HEK293 (cell line): ENCODE measurements at regions of chr12 and their contacts with region 1.

Region 1: DNA sequence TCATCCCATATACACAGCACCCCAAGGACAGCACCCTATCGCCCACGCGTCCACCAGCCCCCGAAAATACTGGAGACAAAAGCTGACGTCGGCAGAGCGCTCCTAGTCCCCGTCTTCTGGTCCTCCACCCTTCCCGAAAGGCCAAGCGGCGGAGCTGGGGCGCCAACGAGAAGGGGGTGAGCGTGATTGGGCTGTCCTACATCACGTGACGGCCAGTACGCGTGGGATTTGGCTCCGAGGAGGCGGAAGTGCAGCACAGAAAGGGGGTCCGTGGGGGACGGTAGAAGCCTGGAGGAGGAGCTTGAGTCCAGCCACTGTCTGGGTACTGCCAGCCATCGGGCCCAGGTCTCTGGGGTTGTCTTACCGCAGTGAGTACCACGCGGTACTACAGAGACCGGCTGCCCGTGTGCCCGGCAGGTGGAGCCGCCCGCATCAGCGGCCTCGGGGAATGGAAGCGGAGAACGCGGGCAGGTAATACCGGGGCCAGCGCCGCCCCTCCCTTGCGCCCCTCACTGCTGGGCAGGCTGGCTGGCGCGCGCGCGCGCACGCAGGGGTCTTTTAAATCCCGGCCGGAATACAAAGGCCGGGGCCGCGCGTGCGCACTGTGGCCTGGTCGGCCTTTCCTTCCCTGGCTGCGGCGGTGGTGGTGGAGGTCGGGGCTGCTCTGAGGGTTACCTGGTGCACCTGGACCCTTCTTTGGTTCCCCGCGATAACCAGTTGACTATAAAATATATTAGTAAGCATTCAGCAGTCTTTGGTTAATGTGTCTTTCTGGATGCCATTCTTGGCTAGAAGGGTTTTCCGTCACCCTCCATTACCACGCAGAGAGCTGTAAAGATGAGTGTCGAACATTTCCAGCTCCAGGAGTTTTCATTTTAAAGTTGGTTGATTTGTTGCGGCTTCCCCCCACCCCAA is at the start of gene TDG:
- H3K4me3 ChIP-seq: peak within 1 kb of the TSS; percentile 83
- H3K27ac ChIP-seq: peak within 1 kb of the TSS; percentile 68
- H3K4me1 ChIP-seq: peaks cover 7% of the 10 kb centered on the region
- CTCF ChIP-seq: peak; percentile 95

Region 2: DNA sequence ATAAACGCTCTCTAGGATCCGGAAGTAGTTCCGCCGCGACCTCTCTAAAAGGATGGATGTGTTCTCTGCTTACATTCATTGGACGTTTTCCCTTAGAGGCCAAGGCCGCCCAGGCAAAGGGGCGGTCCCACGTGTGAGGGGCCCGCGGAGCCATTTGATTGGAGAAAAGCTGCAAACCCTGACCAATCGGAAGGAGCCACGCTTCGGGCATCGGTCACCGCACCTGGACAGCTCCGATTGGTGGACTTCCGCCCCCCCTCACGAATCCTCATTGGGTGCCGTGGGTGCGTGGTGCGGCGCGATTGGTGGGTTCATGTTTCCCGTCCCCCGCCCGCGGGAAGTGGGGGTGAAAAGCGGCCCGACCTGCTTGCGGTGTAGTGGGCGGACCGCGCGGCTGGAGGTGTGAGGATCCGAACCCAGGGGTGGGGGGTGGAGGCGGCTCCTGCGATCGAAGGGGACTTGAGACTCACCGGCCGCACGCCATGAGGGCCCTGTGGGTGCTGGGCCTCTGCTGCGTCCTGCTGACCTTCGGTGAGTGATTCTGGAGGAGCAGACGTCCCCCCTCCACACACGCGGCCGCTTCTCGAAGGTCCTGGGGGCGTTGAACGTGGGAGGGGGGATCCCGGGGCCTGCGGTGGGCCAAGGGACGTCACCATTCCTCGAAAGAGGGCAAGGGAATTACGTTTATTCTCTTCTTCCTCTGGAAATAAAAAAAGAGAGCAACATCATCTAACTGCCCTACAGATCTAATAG is 35.6 kb before region 1 on chr12 and contains the start of gene HSP90B1:
- CTCF ChIA-PET with region 1: no interaction called
- POLR2A ChIA-PET with region 1: interaction called, 49 read pairs
- H3K4me3 ChIP-seq: peak within 1 kb of the TSS; percentile 88
- H3K27ac ChIP-seq: peak within 1 kb of the TSS; percentile 80
- H3K4me1 ChIP-seq: peaks cover 10% of the 10 kb centered on the region
- CTCF ChIP-seq: no peak

Region 3: DNA sequence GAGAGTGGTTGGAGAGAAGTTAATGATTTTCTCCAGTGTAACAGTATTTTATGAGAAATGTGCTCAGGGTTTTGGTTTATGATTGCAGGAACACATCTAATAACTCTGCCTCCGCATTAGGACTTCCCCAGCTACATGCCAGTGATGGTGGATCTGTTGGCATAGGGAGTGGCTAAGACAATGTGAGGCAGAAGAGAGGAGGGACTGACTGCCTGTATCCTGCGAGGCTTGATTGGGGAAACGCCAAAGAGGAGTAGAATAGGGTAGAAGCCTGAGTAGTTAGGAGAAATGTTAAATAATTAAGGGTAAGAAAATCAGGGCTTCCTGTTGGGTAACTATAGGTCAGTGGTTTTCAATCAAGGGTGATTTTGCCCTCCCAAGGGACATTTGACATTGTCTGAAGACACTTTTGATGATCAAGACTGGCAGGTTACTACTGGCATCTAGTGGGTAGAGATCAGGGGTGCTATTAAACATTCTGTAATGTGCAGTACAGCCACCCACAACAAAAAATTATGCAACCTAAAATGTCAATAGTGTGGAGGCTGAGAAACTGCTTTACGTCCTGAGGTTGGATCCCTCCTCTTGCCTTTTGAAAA is 12.6 kb after region 1 on chr12:
- CTCF ChIA-PET with region 1: interaction called, 4 read pairs
- POLR2A ChIA-PET with region 1: interaction called, 14 read pairs
- H3K4me3 ChIP-seq: no peak overlapping the region
- H3K27ac ChIP-seq: no peak overlapping the region
- H3K4me1 ChIP-seq: no peaks in the 10 kb centered on the region
- CTCF ChIP-seq: no peak

Region 4: GRCh38 chr12:104083769-104084475 is 118.1 kb after region 1 on chr12:
- CTCF ChIA-PET with region 1: no interaction called
- POLR2A ChIA-PET with region 1: no interaction called
- H3K4me3 ChIP-seq: no peak overlapping the region
- H3K27ac ChIP-seq: no peak overlapping the region
- H3K4me1 ChIP-seq: no peaks in the 10 kb centered on the region
- CTCF ChIP-seq: no peak

Region 5: DNA sequence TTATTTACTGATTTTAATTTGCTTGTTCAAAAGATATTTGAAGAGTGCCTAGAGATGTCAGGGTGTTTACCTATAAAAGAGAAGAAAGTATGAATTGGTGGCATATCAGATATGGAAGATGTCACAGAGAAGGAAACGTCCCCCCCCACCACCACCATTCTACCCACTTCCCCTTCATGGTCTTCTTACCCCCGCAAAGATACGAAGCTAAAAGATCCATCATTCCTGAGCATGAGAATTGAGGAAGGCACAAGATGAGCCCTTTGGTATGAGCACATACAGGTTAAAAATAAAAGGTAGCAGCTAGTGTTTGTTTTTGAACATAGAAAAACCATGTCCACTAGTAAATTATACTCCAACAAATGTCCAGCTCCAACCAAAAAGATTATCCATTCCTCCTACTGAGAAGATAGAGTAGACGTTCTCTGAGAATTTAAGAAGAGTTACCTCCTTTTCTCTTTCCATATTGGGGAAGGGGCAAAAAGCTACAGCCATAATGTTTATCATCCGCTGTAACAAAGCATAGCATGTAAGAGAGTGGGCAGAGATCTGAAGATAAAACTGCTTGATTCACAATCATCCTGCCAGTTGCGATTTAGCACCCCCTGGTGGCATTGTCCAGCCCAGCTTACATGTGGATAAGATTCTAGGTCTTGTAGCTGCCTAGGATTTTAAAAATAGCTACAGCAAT is 143.1 kb after region 1 on chr12:
- CTCF ChIA-PET with region 1: interaction called, 4 read pairs
- POLR2A ChIA-PET with region 1: interaction called, 12 read pairs
- H3K4me3 ChIP-seq: no peak overlapping the region
- H3K27ac ChIP-seq: no peak overlapping the region
- H3K4me1 ChIP-seq: no peaks in the 10 kb centered on the region
- CTCF ChIP-seq: peak; percentile 51

Region 6: DNA sequence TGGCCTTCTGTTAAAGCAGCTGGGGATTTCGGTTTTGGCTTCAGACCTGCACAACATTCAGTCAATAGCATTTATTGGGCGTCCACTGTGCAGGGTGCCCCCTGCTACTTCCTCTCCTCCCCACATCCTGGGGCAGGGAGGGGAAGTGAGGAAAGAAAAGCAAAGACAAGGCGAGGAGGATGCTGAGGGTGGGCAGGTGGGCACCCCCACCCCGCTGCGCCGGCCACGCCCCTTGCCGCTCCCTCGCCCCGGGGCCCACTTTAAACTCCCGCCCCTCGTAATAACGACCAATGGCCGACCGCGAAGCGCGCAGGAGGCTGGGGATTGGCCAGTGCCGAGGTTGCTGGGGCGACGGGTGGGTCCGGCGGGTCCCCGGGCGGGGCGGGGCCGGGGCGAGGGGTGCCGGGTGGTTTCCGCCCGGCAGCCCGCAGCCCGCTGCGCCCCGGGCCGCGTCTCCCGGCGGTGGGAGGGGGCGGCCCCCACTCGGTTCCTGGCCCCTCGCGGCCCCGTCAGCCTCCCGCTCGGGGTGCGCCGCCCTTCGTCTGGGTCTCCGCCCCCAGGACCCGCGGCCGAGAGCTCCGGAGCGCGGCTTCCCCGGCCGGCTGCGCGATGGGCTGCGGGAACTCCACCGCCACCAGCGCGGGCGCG is 1364.6 kb after region 1 on chr12 and contains the start of gene C12orf75:
- CTCF ChIA-PET with region 1: no interaction called
- POLR2A ChIA-PET with region 1: interaction called, 13 read pairs
- H3K4me3 ChIP-seq: peak within 1 kb of the TSS; percentile 77
- H3K27ac ChIP-seq: peak within 1 kb of the TSS; percentile 49; the same call in 1 of the 2 replicates
- H3K4me1 ChIP-seq: peaks cover 25% of the 10 kb centered on the region
- CTCF ChIP-seq: no peak